ENCODE measurements at regions of chr3 and their contacts with region 1.

Region 1: DNA sequence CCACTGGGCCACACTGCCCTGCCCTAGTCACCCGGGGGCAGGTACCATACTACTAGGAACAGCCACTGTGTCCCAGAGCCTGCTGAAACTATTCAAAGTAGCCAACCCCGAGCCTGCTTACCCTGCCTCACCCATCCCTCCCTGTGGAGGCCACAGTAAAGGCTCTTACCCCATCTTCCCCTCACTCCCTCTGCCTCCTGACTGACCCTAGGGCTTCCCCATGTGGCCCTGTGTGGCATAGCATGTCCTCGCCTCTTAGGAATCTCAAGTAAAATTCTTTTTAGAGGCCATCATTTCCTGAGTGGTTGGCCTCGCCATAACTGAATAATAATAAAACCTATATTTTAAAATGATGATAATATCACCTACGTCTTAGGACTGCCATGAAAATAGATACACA is 112.2 kb upstream of the SLC6A11 start:
- DNase-seq: peak; percentile 16
- H3K4me3 ChIP-seq: no peak overlapping the region
- CTCF ChIP-seq: peak; percentile 58

Region 2: DNA sequence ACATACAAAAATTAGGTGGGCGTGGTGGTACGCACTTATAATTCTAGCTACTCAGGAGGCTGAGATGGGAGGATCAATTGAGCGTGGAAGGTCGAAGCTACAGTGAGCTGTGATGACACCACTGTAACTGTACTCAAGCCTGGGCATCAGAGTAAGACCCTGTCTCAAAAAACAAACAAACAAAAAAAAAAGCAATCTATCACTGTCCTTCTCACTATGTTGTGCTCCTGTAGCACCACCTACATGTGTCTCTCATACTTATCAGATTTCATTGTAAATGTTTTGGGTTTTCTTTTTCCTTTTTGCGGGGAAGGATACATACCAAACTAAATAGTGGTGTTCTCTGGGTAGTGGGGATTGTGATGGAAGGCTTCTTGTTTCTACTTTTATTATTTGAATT is 662.8 kb before region 1 on chr3:
- in situ Hi-C with region 1: no loop called
- DNase-seq: no peak
- H3K4me3 ChIP-seq: no peak overlapping the region
- CTCF ChIP-seq: no peak

Region 3: DNA sequence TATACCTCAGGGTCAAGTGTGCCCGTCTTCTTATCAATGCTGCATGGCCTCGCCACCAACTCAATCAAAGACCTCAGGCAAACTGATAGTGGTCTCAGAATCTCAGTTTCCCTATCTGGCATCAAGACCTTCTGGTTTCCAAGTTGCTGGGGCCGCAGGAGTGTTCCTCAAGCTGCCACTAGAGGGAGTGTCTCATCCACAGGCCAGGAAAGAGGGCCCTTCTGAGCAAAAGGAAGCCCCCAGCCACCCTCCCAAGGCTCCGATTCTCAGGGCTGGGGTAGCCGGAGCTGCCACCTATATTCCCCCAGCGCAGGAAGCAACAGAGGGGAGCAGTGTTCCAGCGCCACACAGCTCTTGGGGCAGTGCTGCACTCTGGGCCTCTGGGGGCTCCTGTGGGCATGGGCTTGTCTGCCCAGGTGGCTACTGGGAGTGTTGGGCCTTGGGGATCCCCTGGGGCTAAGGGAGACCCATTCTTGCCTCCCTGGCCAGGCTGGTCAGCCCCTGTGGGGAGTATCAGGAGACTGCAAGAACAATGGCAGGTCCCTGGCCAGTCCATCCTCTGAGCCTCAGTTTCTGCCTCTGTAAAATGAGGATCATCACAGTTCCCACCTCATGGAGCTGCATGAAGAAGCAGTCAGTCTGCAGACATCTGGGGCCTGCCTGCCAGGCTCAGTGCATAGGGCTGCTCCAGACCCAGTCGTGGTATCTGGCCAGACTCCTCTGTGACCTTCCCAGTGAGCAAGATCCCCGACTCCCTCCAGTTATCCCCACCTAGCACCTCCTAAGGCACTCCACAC is 359.5 kb before region 1 on chr3:
- in situ Hi-C with region 1: loop called (anchors 25 kb)
- DNase-seq: no peak
- H3K4me3 ChIP-seq: no peak overlapping the region
- CTCF ChIP-seq: peak; percentile 97

Region 4: GRCh38 chr3:10646531-10647335 is 57.1 kb before region 1 on chr3:
- in situ Hi-C with region 1: loop called (anchors 5 kb)
- DNase-seq: no peak
- H3K4me3 ChIP-seq: no peak overlapping the region
- CTCF ChIP-seq: no peak

Region 5: DNA sequence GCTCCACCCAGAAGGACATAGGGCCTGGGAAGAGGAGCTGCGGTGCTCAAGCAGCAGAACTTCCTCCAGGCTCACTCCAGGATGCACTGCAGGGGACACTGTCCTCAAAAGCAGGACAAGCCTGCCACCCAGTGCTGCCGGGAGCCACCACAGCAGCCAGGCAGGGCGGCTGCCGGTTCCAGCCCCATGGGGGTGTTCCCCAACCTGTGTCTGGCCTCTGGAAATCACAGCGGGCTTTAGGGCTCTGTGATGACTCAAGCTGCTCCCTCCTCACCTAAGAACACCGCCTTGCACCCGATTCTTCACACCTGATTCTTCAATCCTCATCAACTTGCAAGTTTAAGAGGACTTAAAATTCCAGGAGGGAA is 40.2 kb after region 1 on chr3:
- in situ Hi-C with region 1: loop called (anchors 5 kb)
- DNase-seq: no peak
- H3K4me3 ChIP-seq: no peak overlapping the region
- CTCF ChIP-seq: no peak